Right lobe of liver (tissue), 6 donors: ENCODE measurements at regions of chr11 and their contacts with region 1.

Region 1: GRCh38 chr11:3220521-3221407 is 2.2 kb upstream of the MRGPRG start:
- DNase-seq: peak in 1 of 3 donors; percentile 40
- ATAC-seq: no peak
- H3K4me3 ChIP-seq: no peak overlapping the region
- H3K27ac ChIP-seq: no peak overlapping the region
- H3K4me1 ChIP-seq: no peaks in the 10 kb centered on the region
- H3K27me3 ChIP-seq: no peaks in the 10 kb centered on the region
- CTCF ChIP-seq: no peak
- POLR2A ChIP-seq: no peak

Region 2: GRCh38 chr11:2708151-2708581 is 512.6 kb before region 1 on chr11:
- intact Hi-C with region 1: no loop called
- DNase-seq: no peak
- ATAC-seq: no peak
- H3K4me3 ChIP-seq: no peak overlapping the region
- H3K27ac ChIP-seq: no peak overlapping the region
- H3K4me1 ChIP-seq: no peaks in the 10 kb centered on the region
- H3K27me3 ChIP-seq: no peaks in the 10 kb centered on the region
- CTCF ChIP-seq: no peak
- POLR2A ChIP-seq: no peak

Region 3: GRCh38 chr11:2846056-2846455 is 374.7 kb before region 1 on chr11:
- intact Hi-C with region 1: no loop called
- DNase-seq: no peak
- ATAC-seq: no peak
- H3K4me3 ChIP-seq: no peak overlapping the region
- H3K27ac ChIP-seq: no peak overlapping the region
- H3K4me1 ChIP-seq: no peaks in the 10 kb centered on the region
- H3K27me3 ChIP-seq: no peaks in the 10 kb centered on the region
- CTCF ChIP-seq: no peak
- POLR2A ChIP-seq: no peak

Region 4: GRCh38 chr11:3109921-3110706 is 110.7 kb before region 1 on chr11:
- intact Hi-C with region 1: loop called in 1 of 2 experiments (anchors 10 kb)
- DNase-seq: peak; percentile 31 to 56 (median 53)
- ATAC-seq: peak; percentile 65 to 83 (median 76)
- H3K4me3 ChIP-seq: no peak overlapping the region
- H3K27ac ChIP-seq: no peak overlapping the region
- H3K4me1 ChIP-seq: peaks cover 0 to 5% (median 0%) of the 10 kb centered on the region in 4 donors
- H3K27me3 ChIP-seq: no peaks in the 10 kb centered on the region
- CTCF ChIP-seq: peak; percentile 43 to 49 (median 48)
- POLR2A ChIP-seq: no peak